Sigmoid colon (tissue), 7 donors: ENCODE measurements at regions of chr11 and their contacts with region 1.

Region 1: GRCh38 chr11:63970902-63971301 is 3.5 kb upstream of the COX8A start:
- DNase-seq: no peak
- H3K4me3 ChIP-seq: no peak overlapping the region
- H3K27ac ChIP-seq: no peak overlapping the region
- H3K4me1 ChIP-seq: peaks cover 0 to 13% (median 9%) of the 10 kb centered on the region in 4 donors
- H3K27me3 ChIP-seq: peaks cover 0 to 5% (median 0%) of the 10 kb centered on the region in 3 donors
- CTCF ChIP-seq: no peak
- EP300 ChIP-seq: no peak
- POLR2A ChIP-seq: no peak

Region 2: DNA sequence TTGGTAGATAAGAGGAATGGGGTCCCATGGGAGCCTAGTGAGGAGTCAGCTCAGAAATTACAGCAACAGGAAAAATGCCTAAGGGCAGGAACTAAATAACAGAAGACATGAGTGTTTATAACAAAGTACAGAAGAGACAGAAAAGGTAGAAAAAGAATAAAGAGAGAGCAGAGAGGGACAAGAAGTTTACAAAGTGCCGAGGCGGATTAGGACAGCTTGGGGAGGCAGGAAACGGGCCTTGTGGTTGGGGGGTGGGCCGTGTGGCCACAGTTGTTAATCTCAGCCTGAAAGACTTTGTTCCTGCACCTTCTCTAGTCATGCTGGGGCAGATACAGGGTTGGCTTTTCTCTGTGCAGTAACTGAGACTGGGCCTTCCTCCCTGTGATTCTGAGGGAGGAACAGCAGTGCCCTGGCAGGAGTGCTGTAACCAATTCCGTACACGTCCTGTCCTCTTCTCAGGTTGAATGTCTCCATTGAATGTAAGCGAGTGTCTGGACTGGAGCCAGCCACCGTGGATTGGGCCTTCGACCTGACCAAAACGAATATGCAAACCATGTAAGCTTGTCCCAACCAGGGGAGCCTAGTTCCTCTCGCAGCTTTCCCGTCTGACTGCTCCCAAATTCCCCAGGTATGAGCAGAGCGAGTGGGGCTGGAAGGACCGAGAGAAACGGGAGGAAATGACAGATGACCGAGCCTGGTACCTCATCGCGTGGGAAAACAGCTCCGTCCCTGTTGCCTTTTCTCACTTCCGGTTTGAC is 18.9 kb before region 1 on chr11:
- intact Hi-C with region 1: loop called (anchors 2 kb)
- DNase-seq: no peak
- H3K4me3 ChIP-seq: no peak overlapping the region
- H3K27ac ChIP-seq: no peak overlapping the region
- H3K4me1 ChIP-seq: no peaks in the 10 kb centered on the region
- H3K27me3 ChIP-seq: no peaks in the 10 kb centered on the region
- CTCF ChIP-seq: no peak
- EP300 ChIP-seq: no peak
- POLR2A ChIP-seq: no peak